ENCODE measurements at regions of chrX and their contacts with region 1.

Region 1: GRCh38 chrX:70656304-70656703 is 211.7 kb downstream of the DLG3 start:
- DNase-seq: no peak
- H3K4me3 Mint-ChIP-seq: peak overlapping the region; percentile 4
- H3K27ac Mint-ChIP-seq: peak overlapping the region; percentile 82
- H3K4me1 Mint-ChIP-seq: peaks cover 9% of the 10 kb centered on the region
- H3K27me3 Mint-ChIP-seq: no peaks in the 10 kb centered on the region

Region 2: GRCh38 chrX:69124108-69124507 is 1532.2 kb before region 1 on chrX:
- intact Hi-C with region 1: no loop called
- DNase-seq: no peak
- H3K4me3 Mint-ChIP-seq: no peak overlapping the region
- H3K27ac Mint-ChIP-seq: no peak overlapping the region
- H3K4me1 Mint-ChIP-seq: no peaks in the 10 kb centered on the region
- H3K27me3 Mint-ChIP-seq: peaks cover 12% of the 10 kb centered on the region

Region 3: GRCh38 chrX:70508296-70508911 is 147.9 kb before region 1 on chrX:
- intact Hi-C with region 1: loop called (anchors 2 kb)
- DNase-seq: no peak
- H3K4me3 Mint-ChIP-seq: peak overlapping the region; percentile 20
- H3K27ac Mint-ChIP-seq: peak overlapping the region; percentile 82
- H3K4me1 Mint-ChIP-seq: peaks cover 51% of the 10 kb centered on the region
- H3K27me3 Mint-ChIP-seq: no peaks in the 10 kb centered on the region

Region 4: DNA sequence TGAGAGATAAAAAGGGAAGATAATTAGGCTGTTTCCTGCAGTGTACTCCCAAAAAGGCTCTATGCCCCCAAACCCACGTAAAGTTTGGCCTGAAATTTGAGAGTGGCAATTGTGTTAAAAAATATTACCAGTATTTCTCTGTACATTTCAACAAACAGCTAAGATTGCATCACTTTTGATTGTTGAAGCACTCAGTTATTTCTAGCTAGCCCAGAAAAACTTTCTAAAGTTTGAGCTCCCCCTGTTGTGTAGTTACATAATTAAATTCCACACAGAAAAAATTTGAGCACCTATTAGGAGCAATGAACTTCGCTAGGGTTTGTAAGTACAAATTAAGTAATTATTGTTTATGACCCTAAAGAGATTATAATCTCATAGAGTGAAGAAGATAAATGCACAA is 102.2 kb before region 1 on chrX:
- intact Hi-C with region 1: loop called (anchors 5 kb)
- DNase-seq: no peak
- H3K4me3 Mint-ChIP-seq: no peak overlapping the region
- H3K27ac Mint-ChIP-seq: no peak overlapping the region
- H3K4me1 Mint-ChIP-seq: peaks cover 12% of the 10 kb centered on the region
- H3K27me3 Mint-ChIP-seq: peaks cover 10% of the 10 kb centered on the region

Region 5: DNA sequence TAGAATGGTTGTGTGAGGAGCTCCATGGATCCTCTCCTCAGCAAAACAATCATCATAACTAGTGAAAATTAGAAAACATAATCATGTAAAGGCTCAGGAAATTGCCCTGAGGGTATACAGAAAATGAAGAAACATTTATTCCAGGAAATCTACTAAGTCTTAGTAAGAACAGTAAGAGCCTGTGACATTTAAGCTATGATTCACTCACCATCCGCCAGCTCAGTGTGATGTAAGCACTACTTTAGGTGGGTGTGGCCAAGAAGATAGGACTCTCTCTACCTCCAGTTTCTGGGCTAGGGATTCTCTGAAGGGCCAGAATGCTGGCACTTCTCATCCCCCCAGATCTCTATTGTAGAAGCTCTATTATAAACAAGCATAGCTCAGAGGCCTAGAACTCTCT is 64.2 kb before region 1 on chrX:
- intact Hi-C with region 1: loop called (anchors 1 kb)
- DNase-seq: peak; percentile 5
- H3K4me3 Mint-ChIP-seq: no peak overlapping the region
- H3K27ac Mint-ChIP-seq: peak overlapping the region; percentile 73
- H3K4me1 Mint-ChIP-seq: peaks cover 25% of the 10 kb centered on the region
- H3K27me3 Mint-ChIP-seq: no peaks in the 10 kb centered on the region

Measured in activated T-helper 1 cell treated with anti-CD3 and anti-CD28 coated beads, Interleukin-12 subunit alpha, Interleukin-12 subunit beta, Interleukin-2, Interleukin-4 antibody, amounts not matched to agents 30 ng/mL and 10 ng/mL and 1 ng/mL, durations not matched to agents 14 hours and 24 hours and 36 hours (primary cell).